Heart left ventricle (tissue), 16 donors: ENCODE measurements at regions of chr4 and their contacts with region 1.

Region 1: GRCh38 chr4:48499551-48500066 is 9.6 kb downstream of the ZAR1 start:
- DNase-seq: no peak
- ATAC-seq: no peak
- H3K4me3 ChIP-seq: no peak overlapping the region
- H3K27ac ChIP-seq: no peak overlapping the region
- H3K4me1 ChIP-seq: no peaks in the 10 kb centered on the region
- H3K27me3 ChIP-seq: no peaks in the 10 kb centered on the region
- CTCF ChIP-seq: no peak
- POLR2A ChIP-seq: no peak

Region 2: DNA sequence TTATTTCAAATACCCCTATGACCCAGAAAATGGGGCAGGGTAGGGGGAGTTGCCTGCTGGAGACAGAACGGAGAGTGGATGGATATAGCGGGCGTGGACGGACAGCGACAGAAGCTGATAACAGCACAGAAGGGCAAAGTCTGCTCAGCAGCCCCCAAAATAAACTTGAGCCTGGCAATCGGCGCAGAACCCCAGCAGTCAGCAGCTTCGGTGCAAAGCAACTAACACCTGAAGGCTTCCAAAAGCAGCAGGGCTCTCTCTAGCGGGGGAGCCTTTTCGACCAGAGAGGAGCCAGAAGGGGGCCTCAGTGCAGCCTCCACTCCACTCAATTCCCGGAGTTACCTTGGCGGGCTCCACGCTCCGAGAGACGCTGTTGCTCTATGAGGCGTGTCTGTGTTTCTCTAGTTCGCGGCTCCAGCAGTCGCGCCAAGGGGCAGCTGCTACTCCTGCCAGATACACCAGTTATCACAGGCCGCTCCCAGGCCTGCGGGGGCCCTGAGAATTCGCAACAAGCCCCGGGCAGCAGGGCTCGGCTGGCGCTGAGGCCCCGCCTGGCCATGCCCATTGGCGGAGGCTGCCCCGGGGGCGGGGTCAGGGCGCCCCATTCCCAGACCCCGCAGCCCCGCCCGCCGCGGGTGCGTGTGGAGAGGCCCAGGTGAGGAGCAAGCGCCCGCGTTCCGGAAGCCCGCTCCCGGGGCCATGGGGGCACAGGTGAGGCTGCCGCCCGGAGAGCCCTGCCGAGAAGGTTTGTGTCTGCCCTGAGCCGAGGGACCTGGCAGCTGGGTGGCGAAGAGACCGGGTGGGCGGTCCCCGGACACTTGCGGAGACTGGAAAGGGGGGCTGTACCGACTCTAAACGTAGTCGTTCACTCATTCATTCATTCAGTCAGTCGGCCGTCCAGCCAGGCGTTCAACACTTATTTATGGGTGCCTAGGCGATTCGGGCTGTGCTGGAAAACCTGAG is 483.2 kb before region 1 on chr4 and contains the starts of genes CNGA1 and NIPAL1:
- intact Hi-C with region 1: no loop called
- DNase-seq: peak; percentile 61 to 86 (median 76)
- ATAC-seq: peak; percentile 91 to 99 (median 97)
- H3K4me3 ChIP-seq: peak within 1 kb of the TSS; percentile 39 to 85 (median 66)
- H3K27ac ChIP-seq: peak within 1 kb of the TSS in 6 of 12 donors; percentile 1 to 64 (median 46)
- H3K4me1 ChIP-seq: peaks cover 0 to 18% (median 8%) of the 10 kb centered on the region in 12 donors
- H3K27me3 ChIP-seq: peaks cover 0 to 36% (median 8%) of the 10 kb centered on the region in 9 donors
- CTCF ChIP-seq: peak in 8 of 12 donors; percentile 12 to 51 (median 38)
- POLR2A ChIP-seq: no peak
- total RNA-seq, gene CNGA1: 0.34 to 1.9 (median 0.73) TPM in 6 of 9 donors, not detected in the others
- total RNA-seq, gene NIPAL1: 0.05 to 0.92 (median 0.34) TPM in 7 of 9 donors, not detected in the others

Region 3: DNA sequence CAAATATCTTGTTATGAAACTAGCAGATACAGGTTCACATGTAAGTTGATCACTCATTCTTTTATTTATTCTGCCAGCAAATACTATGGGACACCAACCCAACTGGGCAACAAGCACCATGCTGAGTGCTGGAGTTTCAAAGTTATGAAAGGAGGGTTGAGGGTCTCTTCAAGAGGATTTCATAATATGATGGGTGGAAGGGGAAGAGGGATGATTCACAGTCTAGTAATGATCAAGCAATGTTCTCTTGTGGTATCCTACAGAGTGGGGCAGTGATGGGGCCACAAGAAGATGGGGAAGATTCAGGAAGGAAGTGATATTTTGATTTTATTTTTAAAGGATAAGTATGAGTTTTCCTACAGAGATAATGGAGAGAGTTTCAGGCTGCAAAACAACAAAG is 319.4 kb before region 1 on chr4:
- intact Hi-C with region 1: no loop called
- DNase-seq: no peak
- ATAC-seq: no peak
- H3K4me3 ChIP-seq: no peak overlapping the region
- H3K27ac ChIP-seq: no peak overlapping the region
- H3K4me1 ChIP-seq: no peaks in the 10 kb centered on the region
- H3K27me3 ChIP-seq: no peaks in the 10 kb centered on the region
- CTCF ChIP-seq: no peak
- POLR2A ChIP-seq: no peak

Region 4: DNA sequence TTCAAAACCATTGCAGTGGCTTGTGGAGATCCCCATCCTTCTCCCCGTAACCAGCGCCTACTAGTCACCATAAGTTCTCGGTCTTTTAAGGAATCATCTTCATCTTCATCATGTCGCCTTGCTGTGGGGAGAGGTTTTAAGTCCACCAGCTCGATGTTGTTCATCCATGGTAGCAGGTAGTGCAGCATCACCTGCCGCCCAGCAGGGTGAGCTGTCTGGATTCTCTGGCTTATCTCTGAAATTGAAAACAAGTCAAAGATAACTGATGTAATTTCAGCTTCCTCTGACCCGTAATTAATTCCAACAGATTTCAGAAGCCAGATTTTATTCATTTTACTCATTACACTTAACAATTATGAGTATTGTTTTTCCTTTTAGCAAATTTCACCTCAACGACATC is 57.9 kb after region 1 on chr4:
- intact Hi-C with region 1: loop called in 1 of 10 experiments (anchors 10 kb)
- DNase-seq: no peak
- ATAC-seq: no peak
- H3K4me3 ChIP-seq: no peak overlapping the region
- H3K27ac ChIP-seq: no peak overlapping the region
- H3K4me1 ChIP-seq: no peaks in the 10 kb centered on the region
- H3K27me3 ChIP-seq: no peaks in the 10 kb centered on the region
- CTCF ChIP-seq: peak in 1 of 12 donors; percentile 7
- POLR2A ChIP-seq: no peak

Region 5: GRCh38 chr4:48779998-48780742 is 280.6 kb after region 1 on chr4 and contains the start of gene FRYL:
- intact Hi-C with region 1: no loop called
- DNase-seq: peak; percentile 99 to 100 (median 100)
- ATAC-seq: peak; percentile 94 to 98 (median 98)
- H3K4me3 ChIP-seq: peak within 1 kb of the TSS; percentile 71 to 99 (median 94)
- H3K27ac ChIP-seq: peak within 1 kb of the TSS; percentile 91 to 98 (median 97)
- H3K4me1 ChIP-seq: peaks cover 4 to 42% (median 34%) of the 10 kb centered on the region in 12 donors
- H3K27me3 ChIP-seq: no peaks in the 10 kb centered on the region
- CTCF ChIP-seq: no peak
- POLR2A ChIP-seq: peak in 1 of 2 donors; percentile 76
- total RNA-seq, gene FRYL: 27.0 to 61.3 (median 36.3) TPM